Activated T-helper 2 cell treated with anti-CD3 and anti-CD28 coated beads, Interferon-gamma antibody, Interleukin-2, Interleukin-4, amounts not matched to agents 10 μg/mL and 5 μg/mL and 100 μg/mL, durations not matched to agents 14 hours and 24 hours and 36 hours (primary cell): ENCODE measurements at regions of chr2 and their contacts with region 1.

Region 1: DNA sequence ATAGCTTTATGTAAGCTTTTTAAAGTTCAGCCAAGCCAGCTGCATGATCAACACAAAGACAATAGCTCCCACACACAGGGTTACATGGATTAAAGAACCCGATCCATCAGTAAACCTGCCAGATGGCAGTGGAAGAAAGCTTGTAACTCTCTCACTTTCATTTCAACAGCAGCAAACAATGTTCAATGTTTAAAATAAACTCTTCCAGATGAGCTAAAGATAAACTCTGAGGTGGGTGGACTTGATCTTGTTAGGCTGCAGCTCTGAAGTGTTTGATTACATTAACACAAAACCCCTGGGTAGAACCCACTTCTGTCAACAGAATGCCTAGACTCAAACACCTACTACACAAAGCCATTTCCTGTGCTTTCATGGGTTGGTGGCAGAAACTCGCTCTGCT is 13.9 kb downstream of the RDH14 start:
- DNase-seq: no peak
- H3K4me3 Mint-ChIP-seq: no peak overlapping the region
- H3K27ac Mint-ChIP-seq: peak overlapping the region; percentile 76
- H3K4me1 Mint-ChIP-seq: peaks cover 33% of the 10 kb centered on the region
- H3K27me3 Mint-ChIP-seq: no peaks in the 10 kb centered on the region

Region 2: DNA sequence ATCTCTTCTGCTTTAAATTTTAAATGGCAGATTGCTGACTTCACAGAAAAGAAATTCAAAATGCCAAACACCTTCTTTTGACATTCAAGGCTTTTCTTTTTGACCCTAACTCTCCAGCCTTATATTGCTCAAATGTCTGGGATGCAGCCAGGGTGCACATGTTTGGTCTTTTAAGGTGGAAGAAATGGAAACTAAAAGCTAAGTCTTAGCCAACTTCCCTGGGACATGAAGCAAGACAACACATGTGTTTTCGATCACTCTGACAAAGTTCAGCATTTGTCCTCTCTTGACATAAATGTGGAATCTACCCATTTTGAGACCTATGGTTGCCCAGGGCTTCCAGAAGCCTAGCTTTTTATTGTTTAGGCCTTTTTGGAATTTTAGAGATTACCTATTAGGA is 147.7 kb before region 1 on chr2:
- intact Hi-C with region 1: no loop called
- DNase-seq: no peak
- H3K4me3 Mint-ChIP-seq: no peak overlapping the region
- H3K27ac Mint-ChIP-seq: no peak overlapping the region
- H3K4me1 Mint-ChIP-seq: no peaks in the 10 kb centered on the region
- H3K27me3 Mint-ChIP-seq: no peaks in the 10 kb centered on the region

Region 3: GRCh38 chr2:18560031-18560796 is 13.6 kb after region 1 on chr2 and contains the start of gene RDH14:
- intact Hi-C with region 1: loop called (anchors 1 kb)
- DNase-seq: peak; percentile 86
- H3K4me3 Mint-ChIP-seq: peak within 1 kb of the TSS; percentile 88
- H3K27ac Mint-ChIP-seq: peak within 1 kb of the TSS; percentile 90
- H3K4me1 Mint-ChIP-seq: peaks cover 31% of the 10 kb centered on the region
- H3K27me3 Mint-ChIP-seq: no peaks in the 10 kb centered on the region
- total RNA-seq, gene RDH14: 12.4 and 15.2 TPM in 2 replicates

Region 4: GRCh38 chr2:18605115-18605514 is 58.5 kb after region 1 on chr2:
- intact Hi-C with region 1: loop called (anchors 1 kb)
- DNase-seq: no peak
- H3K4me3 Mint-ChIP-seq: no peak overlapping the region
- H3K27ac Mint-ChIP-seq: no peak overlapping the region
- H3K4me1 Mint-ChIP-seq: peaks cover 14% of the 10 kb centered on the region
- H3K27me3 Mint-ChIP-seq: no peaks in the 10 kb centered on the region